ENCODE measurements at regions of chr6 and their contacts with region 1.

Region 1: DNA sequence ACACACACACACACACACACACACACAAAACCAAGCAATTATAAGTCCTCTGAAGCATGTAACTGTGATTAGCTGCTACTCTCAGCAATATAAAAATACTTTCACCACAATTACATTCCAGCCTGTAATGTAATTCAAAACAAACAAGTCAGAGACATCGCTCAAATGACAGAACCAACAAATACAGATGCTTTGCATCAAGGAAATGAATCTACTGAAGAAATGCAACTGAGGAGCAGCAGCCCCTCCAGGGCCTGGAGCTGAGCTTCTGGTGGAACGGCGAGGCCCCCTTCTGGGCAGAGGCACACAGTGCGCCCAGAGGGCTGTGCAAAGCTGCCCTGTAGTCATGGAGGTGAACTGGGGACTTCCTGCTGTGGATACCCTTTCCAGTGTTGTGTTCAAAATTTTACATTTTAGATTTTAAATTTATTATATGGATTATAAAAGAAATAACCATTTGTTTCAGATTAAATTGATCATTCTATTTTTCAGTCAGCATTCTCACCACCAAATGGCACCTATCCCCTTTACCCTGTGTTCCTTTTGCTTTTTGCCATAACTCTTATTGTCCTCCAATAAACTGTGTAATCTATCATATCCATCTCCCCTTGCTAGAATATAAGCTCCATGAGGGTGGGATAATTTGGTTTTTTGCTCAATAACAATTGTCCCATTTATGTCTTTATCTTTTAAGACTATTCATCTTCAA is 23.2 kb downstream of the ADAT2 start:
- DNase-seq: peak; percentile 53 to 80 (median 73)
- ATAC-seq: peak; percentile 99
- H3K4me3 ChIP-seq: no peak overlapping the region
- H3K4me3 Mint-ChIP-seq: no peak overlapping the region
- H3K27ac ChIP-seq: no peak overlapping the region
- H3K27ac Mint-ChIP-seq: peak overlapping the region in 3 of 9 donors; percentile 25 to 75 (median 28)
- H3K4me1 ChIP-seq: no peaks in the 10 kb centered on the region
- H3K4me1 Mint-ChIP-seq: peaks cover 0 to 5% (median 0%) of the 10 kb centered on the region in 7 donors
- H3K27me3 ChIP-seq: no peaks in the 10 kb centered on the region
- H3K27me3 Mint-ChIP-seq: no peaks in the 10 kb centered on the region

Region 2: GRCh38 chr6:142500250-142500786 is 926.9 kb before region 1 on chr6:
- CTCF ChIA-PET with region 1: no interaction called
- POLR2A ChIA-PET with region 1: no interaction called
- intact Hi-C with region 1: no loop called
- DNase-seq: no peak
- ATAC-seq: no peak
- H3K4me3 ChIP-seq: no peak overlapping the region
- H3K4me3 Mint-ChIP-seq: no peak overlapping the region
- H3K27ac ChIP-seq: no peak overlapping the region
- H3K27ac Mint-ChIP-seq: peak overlapping the region in 2 of 9 donors; percentile 16 to 38
- H3K4me1 ChIP-seq: no peaks in the 10 kb centered on the region
- H3K4me1 Mint-ChIP-seq: peaks cover 0 to 1% (median 0%) of the 10 kb centered on the region in 7 donors
- H3K27me3 ChIP-seq: no peaks in the 10 kb centered on the region
- H3K27me3 Mint-ChIP-seq: no peaks in the 10 kb centered on the region

Region 3: GRCh38 chr6:143026696-143027449 is 400.4 kb before region 1 on chr6:
- CTCF ChIA-PET with region 1: interaction called, 5 read pairs
- POLR2A ChIA-PET with region 1: no interaction called
- intact Hi-C with region 1: loop called in 1 of 2 experiments (anchors 5 kb)
- DNase-seq: peak in 7 of 9 donors; percentile 3 to 47 (median 34)
- ATAC-seq: peak; percentile 76
- H3K4me3 ChIP-seq: no peak overlapping the region
- H3K4me3 Mint-ChIP-seq: no peak overlapping the region
- H3K27ac ChIP-seq: no peak overlapping the region
- H3K27ac Mint-ChIP-seq: peak overlapping the region in 3 of 9 donors; percentile 28 to 76 (median 53)
- H3K4me1 ChIP-seq: no peaks in the 10 kb centered on the region
- H3K4me1 Mint-ChIP-seq: peaks cover 0 to 5% (median 0%) of the 10 kb centered on the region in 7 donors
- H3K27me3 ChIP-seq: no peaks in the 10 kb centered on the region
- H3K27me3 Mint-ChIP-seq: no peaks in the 10 kb centered on the region

Region 4: GRCh38 chr6:143232849-143233248 is 194.4 kb before region 1 on chr6:
- CTCF ChIA-PET with region 1: no interaction called
- POLR2A ChIA-PET with region 1: no interaction called
- intact Hi-C with region 1: loop called in 1 of 2 experiments (anchors 1 kb)
- DNase-seq: peak in 1 of 9 donors; percentile 21
- ATAC-seq: no peak
- H3K4me3 ChIP-seq: no peak overlapping the region
- H3K4me3 Mint-ChIP-seq: no peak overlapping the region
- H3K27ac ChIP-seq: no peak overlapping the region
- H3K27ac Mint-ChIP-seq: no peak overlapping the region
- H3K4me1 ChIP-seq: no peaks in the 10 kb centered on the region
- H3K4me1 Mint-ChIP-seq: peaks cover 0 to 4% (median 0%) of the 10 kb centered on the region in 7 donors
- H3K27me3 ChIP-seq: no peaks in the 10 kb centered on the region
- H3K27me3 Mint-ChIP-seq: no peaks in the 10 kb centered on the region

Region 5: DNA sequence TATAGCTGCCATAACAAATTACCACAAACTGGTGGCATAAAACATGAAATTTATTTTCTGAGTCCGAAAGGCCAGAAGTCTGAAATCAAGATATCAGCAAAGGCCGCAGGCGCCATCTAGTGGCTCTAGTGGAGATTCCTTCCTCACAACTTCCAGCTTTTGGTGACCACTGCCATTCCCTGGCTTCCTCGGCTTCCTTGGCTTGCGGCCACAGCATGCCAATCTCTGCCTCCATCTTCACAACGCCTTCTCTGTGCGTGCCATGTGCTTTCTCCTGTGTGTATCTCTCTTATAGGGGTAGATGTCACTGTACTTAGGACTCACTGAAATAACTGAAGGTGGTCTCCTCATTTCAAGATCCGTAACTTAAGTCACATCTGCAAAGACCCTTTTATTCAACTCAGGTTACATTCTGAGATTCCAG is 586.2 kb after region 1 on chr6:
- CTCF ChIA-PET with region 1: no interaction called
- POLR2A ChIA-PET with region 1: no interaction called
- intact Hi-C with region 1: loop called in 1 of 2 experiments (anchors 1 kb)
- DNase-seq: peak; percentile 18 to 58 (median 45)
- ATAC-seq: peak; percentile 54
- H3K4me3 ChIP-seq: no peak overlapping the region
- H3K4me3 Mint-ChIP-seq: no peak overlapping the region
- H3K27ac ChIP-seq: no peak overlapping the region
- H3K27ac Mint-ChIP-seq: peak overlapping the region in 1 of 9 donors; percentile 9
- H3K4me1 ChIP-seq: no peaks in the 10 kb centered on the region
- H3K4me1 Mint-ChIP-seq: peaks cover 0 to 4% (median 0%) of the 10 kb centered on the region in 7 donors
- H3K27me3 ChIP-seq: peaks cover 0 to 6% of the 10 kb centered on the region in 2 donors
- H3K27me3 Mint-ChIP-seq: peaks cover 11 to 45% (median 28%) of the 10 kb centered on the region in 5 donors